CD8-positive, alpha-beta memory T cell (primary cell): ENCODE measurements at regions of chr12 and their contacts with region 1.

Region 1: GRCh38 chr12:14384783-14385638 is 19.5 kb downstream of the ATF7IP start:
- DNase-seq: peak in 4 of 5 donors; percentile 53 to 81 (median 78)
- H3K4me3 ChIP-seq: peak overlapping the region; percentile 52
- H3K4me3 Mint-ChIP-seq: peak overlapping the region; percentile 78 to 89 (median 85)
- H3K27ac ChIP-seq: peak overlapping the region; percentile 68
- H3K27ac Mint-ChIP-seq: peak overlapping the region; percentile 88 to 96 (median 94)
- H3K4me1 ChIP-seq: peaks cover 67% of the 10 kb centered on the region
- H3K4me1 Mint-ChIP-seq: peaks cover 51 to 79% (median 67%) of the 10 kb centered on the region in 3 donors
- H3K27me3 ChIP-seq: no peaks in the 10 kb centered on the region
- H3K27me3 Mint-ChIP-seq: no peaks in the 10 kb centered on the region

Region 2: DNA sequence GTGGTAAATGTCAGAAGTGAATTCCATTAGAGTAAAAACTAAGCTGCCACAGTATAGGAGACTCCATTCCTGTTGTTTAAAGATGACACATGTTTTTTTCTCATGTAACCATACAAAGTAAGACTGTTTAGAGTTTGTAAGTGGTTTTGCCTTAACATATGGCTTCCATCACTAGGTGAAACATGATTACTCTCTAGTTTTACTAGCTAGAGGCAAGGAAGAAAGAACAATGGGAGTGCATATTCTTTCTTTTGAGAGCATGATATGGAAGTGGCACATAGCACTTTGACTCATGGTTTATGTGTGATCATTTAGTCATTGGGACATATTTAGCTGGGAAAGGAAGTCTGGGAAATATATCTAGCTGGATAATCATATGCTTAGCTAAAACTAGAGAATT is 11.8 kb before region 1 on chr12:
- CTCF ChIA-PET with region 1: interaction called, 32 read pairs
- POLR2A ChIA-PET with region 1: interaction called, 38 read pairs
- DNase-seq: no peak
- H3K4me3 ChIP-seq: no peak overlapping the region
- H3K4me3 Mint-ChIP-seq: peak overlapping the region; percentile 2 to 65 (median 20)
- H3K27ac ChIP-seq: no peak overlapping the region
- H3K27ac Mint-ChIP-seq: peak overlapping the region in 7 of 8 donors; percentile 3 to 89 (median 73)
- H3K4me1 ChIP-seq: peaks cover 74% of the 10 kb centered on the region
- H3K4me1 Mint-ChIP-seq: peaks cover 64 to 83% (median 78%) of the 10 kb centered on the region in 3 donors
- H3K27me3 ChIP-seq: no peaks in the 10 kb centered on the region
- H3K27me3 Mint-ChIP-seq: no peaks in the 10 kb centered on the region

Region 3: DNA sequence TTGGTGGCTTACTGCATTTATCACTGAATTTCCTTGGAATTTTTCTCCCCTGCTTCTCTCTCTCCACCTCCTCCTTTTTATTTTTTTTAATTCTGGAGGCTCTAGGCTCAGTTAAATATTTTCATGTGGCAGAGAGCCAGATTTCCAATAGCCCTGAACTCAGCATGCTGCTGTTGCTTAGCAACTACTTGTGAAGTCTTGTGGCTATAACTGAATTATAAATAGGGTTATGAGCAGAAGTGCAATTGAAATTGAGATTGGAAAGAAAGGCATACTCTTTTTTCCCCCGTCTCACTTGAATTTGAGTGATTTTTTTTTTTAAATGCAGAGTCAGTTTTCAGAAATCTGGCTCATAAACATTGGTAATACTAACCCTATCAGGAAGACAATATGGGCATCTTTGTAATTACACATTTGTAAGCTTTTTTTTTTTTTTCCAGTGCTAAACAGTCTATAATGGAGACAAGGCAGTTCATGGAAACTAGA is 18.7 kb after region 1 on chr12:
- CTCF ChIA-PET with region 1: interaction called, 20 read pairs
- POLR2A ChIA-PET with region 1: interaction called, 6 read pairs
- DNase-seq: peak in 3 of 5 donors; percentile 60 to 69 (median 61)
- H3K4me3 ChIP-seq: no peak overlapping the region
- H3K4me3 Mint-ChIP-seq: peak overlapping the region; percentile 70 to 86 (median 78)
- H3K27ac ChIP-seq: peak overlapping the region; percentile 13
- H3K27ac Mint-ChIP-seq: peak overlapping the region; percentile 87 to 98 (median 94)
- H3K4me1 ChIP-seq: peaks cover 94% of the 10 kb centered on the region
- H3K4me1 Mint-ChIP-seq: peaks cover 75 to 91% (median 86%) of the 10 kb centered on the region in 3 donors
- H3K27me3 ChIP-seq: no peaks in the 10 kb centered on the region
- H3K27me3 Mint-ChIP-seq: no peaks in the 10 kb centered on the region

Region 4: GRCh38 chr12:14417715-14418114 is 32.7 kb after region 1 on chr12:
- CTCF ChIA-PET with region 1: interaction called, 16 read pairs
- POLR2A ChIA-PET with region 1: interaction called, 12 read pairs
- DNase-seq: peak; percentile 51 to 85 (median 69)
- H3K4me3 ChIP-seq: no peak overlapping the region
- H3K4me3 Mint-ChIP-seq: peak overlapping the region; percentile 50 to 88 (median 85)
- H3K27ac ChIP-seq: no peak overlapping the region
- H3K27ac Mint-ChIP-seq: peak overlapping the region; percentile 23 to 97 (median 89)
- H3K4me1 ChIP-seq: peaks cover 63% of the 10 kb centered on the region
- H3K4me1 Mint-ChIP-seq: peaks cover 65 to 88% (median 84%) of the 10 kb centered on the region in 3 donors
- H3K27me3 ChIP-seq: no peaks in the 10 kb centered on the region
- H3K27me3 Mint-ChIP-seq: no peaks in the 10 kb centered on the region